Left ventricle myocardium superior (tissue), 1 donor: ENCODE measurements at regions of chr12 and their contacts with region 1.

Region 1: GRCh38 chr12:39764944-39765560 is 145.4 kb upstream of the ABCD2 start:
- DNase-seq: no peak
- ATAC-seq: peak; percentile 53

Region 2: GRCh38 chr12:39237004-39237403 is 528.0 kb before region 1 on chr12:
- intact Hi-C with region 1: no loop called
- DNase-seq: no peak
- ATAC-seq: no peak

Region 3: GRCh38 chr12:39595923-39596322 is 169.1 kb before region 1 on chr12:
- intact Hi-C with region 1: no loop called
- DNase-seq: no peak
- ATAC-seq: no peak

Region 4: GRCh38 chr12:39638178-39638577 is 126.9 kb before region 1 on chr12:
- intact Hi-C with region 1: no loop called
- DNase-seq: no peak
- ATAC-seq: peak; percentile 38

Region 5: GRCh38 chr12:39712334-39712733 is 52.7 kb before region 1 on chr12:
- intact Hi-C with region 1: no loop called
- DNase-seq: no peak
- ATAC-seq: no peak

Region 6: DNA sequence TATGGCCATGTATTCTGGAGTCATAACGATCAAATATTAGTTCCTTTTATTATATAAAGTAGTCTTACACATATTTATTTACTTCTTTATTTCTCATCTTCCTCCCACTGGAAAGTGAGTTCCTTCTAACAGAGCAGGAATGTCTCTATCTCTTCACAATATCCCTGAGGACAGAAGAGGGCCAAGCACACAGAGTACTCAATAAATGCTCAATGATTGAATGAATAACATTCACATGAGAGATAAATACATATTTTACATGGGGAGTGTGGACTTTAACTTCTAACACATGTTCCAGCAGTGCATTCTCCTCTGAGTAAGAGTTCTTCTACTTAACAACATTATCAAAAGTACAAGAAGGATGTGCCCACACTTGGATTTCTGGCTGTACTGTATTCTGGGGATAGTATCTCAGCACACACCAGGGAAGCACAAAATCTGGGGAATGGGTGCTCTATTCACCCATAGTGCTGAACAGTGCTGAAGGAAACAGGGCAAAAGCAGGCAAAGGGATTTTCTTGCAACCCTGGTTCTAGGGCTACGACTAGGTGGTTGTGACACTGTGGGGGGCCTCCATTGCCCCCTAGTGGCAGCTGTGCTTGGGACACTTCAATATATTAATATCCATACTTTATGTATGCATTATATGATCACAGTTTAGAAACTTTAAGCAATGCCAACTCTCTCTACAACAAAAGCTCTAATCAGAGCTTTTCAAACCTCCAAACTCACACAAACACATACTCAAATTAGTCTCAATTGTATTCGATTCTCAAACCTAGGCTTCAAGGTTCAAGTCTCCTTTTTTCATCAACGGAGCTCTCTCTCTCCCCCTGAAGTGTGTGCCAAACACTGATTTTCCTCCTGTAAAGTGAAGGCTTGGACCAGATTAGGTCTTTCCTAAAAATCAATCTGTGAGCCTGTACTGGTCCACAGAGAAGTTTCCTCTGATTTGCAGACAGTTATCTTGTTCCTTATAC is 225.4 kb after region 1 on chr12:
- intact Hi-C with region 1: loop called (anchors 10 kb)
- DNase-seq: peak; percentile 71
- ATAC-seq: peak; percentile 80